ENCODE measurements at regions of chr2 and their contacts with region 1.

Region 1: DNA sequence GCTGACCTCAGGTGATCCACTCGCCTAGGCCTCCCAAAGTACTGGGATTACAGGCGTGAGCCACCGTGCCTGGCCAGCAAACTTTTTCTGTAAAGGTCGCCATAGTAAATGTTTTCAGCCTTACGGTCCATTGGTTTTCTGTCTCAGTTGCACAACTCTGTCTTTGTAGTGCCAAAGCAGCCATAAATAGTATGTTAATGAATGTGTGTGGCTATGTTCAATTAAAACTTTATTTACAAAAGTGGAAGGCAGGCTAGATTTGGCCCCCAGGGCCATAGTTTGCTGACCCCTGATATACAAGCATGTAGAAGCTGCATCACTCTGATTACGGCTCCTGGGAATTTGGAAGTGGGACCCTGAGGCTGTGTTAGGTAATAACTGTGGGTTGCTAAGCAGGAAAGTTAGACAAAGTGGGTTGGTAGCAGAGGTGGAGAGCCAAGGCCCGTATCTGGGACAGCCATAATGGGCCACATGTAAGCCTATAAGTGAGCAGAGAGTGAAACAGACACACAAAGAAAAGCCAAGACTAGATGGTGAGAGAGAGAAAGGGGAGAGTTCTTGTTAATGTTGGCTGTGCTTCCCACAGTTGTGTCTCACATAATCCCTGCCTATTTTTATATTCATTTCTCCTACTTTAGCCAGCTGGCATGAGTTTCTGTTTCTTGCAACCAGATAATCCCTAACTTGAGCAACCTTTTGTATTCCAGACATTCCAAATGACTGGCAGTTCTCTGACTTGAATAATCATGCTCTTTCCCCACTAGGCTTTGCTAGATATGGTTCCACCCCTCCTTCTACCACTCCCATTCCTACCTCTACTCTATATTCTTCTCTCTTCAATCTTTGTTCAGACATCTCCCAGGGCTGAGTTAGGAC is 223.3 kb upstream of the STON1 start:
- DNase-seq: no peak
- H3K4me3 ChIP-seq: no peak overlapping the region
- H3K27ac ChIP-seq: no peak overlapping the region
- H3K4me1 ChIP-seq: no peaks in the 10 kb centered on the region
- H3K27me3 ChIP-seq: no peaks in the 10 kb centered on the region
- CTCF ChIP-seq: no peak
- POLR2A ChIP-seq: no peak

Region 2: DNA sequence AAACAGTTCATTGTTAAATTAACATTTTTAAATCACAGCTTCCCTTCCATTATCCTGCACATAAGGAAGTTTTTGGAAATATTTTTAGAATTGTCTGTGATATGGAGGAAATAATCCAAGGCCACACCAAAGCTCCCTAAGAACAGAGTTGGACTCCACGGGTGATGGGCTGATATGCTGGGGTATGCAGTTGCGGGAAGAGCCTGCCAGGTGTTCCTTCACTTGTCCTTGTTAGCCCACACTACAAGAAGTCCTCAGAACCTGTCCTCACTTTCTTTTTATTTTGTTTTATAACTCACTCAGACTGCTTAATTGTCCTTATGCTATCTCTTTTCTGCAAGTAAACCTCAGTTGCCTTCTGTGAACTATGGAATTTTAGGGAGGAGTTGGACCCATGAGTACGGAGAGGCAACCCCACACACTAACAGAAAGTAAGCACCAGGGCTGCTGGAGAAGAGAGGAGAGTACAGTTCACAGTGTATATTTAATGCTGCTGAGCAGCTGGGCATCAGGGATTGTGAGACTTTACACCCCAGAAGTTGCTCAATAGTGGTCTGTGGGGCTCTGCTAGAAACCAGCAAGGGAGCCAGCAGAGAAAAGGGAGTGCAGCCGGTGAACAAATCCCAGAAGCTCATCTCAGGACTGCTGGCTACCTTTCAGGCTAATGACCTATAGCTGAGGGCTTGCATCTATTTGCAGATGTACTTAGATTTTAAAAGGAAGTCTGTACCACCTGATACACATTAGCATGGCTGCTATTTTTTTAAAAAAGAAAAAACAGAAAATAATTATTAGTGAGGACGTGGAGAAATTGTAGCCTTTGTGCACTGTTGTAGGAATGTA is 56.8 kb before region 1 on chr2:
- intact Hi-C with region 1: loop called (anchors 10 kb)
- DNase-seq: no peak
- H3K4me3 ChIP-seq: no peak overlapping the region
- H3K27ac ChIP-seq: peak overlapping the region in 7 of 8 donors; percentile 4 to 84 (median 68)
- H3K4me1 ChIP-seq: peaks cover 0 to 63% (median 21%) of the 10 kb centered on the region in 6 donors
- H3K27me3 ChIP-seq: no peaks in the 10 kb centered on the region
- CTCF ChIP-seq: no peak
- POLR2A ChIP-seq: no peak

Region 3: DNA sequence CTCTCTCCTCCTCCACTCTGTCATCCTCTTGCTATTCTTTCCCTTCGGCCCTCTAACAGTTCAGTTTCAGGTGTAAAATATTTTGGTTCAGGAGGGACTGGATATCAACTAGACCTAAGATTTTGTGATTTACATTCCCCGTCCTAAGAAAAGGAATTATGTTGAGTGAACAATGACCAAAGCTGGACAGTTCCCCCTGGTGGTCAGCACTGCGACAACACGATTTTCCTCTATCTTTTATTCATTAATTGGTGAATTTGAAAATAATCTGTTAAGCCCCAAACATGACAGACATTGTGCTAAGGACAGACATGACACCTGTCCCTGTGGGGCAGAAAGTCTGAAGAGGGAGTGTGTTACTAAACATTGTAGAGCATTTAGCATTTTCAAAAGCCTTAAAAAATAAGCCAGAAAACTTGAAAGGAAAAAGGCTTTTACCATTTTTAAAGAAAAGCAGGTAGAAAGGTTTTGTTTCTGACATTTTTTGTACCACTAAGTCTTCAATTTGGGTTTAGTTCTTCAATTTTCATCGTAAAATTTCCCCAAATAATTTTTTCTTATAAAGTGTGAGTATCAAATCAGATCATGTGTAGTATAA is 282.6 kb after region 1 on chr2:
- intact Hi-C with region 1: no loop called
- DNase-seq: no peak
- H3K4me3 ChIP-seq: no peak overlapping the region
- H3K27ac ChIP-seq: no peak overlapping the region
- H3K4me1 ChIP-seq: peaks cover 0 to 12% (median 0%) of the 10 kb centered on the region in 6 donors
- H3K27me3 ChIP-seq: no peaks in the 10 kb centered on the region
- CTCF ChIP-seq: peak in 8 of 11 experiments; percentile 10 to 48 (median 39)
- POLR2A ChIP-seq: no peak